SK-N-SH (cell line): ENCODE measurements at regions of chr7 and their contacts with region 1.

Region 1: GRCh38 chr7:78601728-78602127 is 803.2 kb downstream of the PHTF2 start:
- DNase-seq: no peak
- H3K4me3 ChIP-seq: no peak overlapping the region
- H3K27ac ChIP-seq: no peak overlapping the region
- H3K4me1 ChIP-seq: peaks cover 0 to 4% of the 10 kb centered on the region in 2 experiments; a peak in 3 of 4 replicates
- H3K27me3 ChIP-seq: no peaks in the 10 kb centered on the region
- CTCF ChIP-seq: no peak
- EP300 ChIP-seq: no peak
- RAD21 ChIP-seq: no peak

Region 2: DNA sequence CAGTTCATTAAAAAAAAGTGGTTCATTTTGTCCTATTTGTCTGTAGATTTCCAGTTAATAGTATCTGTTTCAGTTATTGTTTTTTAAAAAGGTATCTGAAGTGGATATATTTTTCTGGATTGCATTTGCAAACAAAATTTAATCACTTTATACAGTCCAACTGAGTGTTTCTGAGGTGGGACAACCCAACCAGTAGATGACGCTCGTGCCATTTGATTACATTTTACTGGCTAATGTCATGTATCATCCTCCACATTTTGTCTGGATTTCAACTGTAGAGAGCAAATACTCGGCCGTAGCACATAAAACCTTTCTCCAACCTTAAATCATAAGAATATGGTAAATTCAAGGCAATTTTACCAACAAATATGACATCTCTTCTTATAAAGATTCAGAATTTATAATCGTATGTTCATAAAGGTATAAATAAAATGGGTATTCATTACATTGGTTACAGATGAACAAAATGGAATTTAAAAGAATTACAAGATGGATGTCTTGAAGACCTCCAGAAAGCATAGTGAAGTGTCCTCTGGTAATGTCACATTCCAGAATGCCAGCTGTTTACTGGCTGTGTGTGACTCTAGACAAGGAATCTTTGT is 14.2 kb before region 1 on chr7:
- CTCF ChIA-PET with region 1: interaction called, 12 read pairs
- POLR2A ChIA-PET with region 1: no interaction called
- DNase-seq: peak; percentile 47
- H3K4me3 ChIP-seq: no peak overlapping the region
- H3K27ac ChIP-seq: no peak overlapping the region
- H3K4me1 ChIP-seq: no peaks in the 10 kb centered on the region; a peak in 1 of 4 replicates
- H3K27me3 ChIP-seq: no peaks in the 10 kb centered on the region
- CTCF ChIP-seq: peak; percentile 97
- EP300 ChIP-seq: no peak
- RAD21 ChIP-seq: peak; percentile 94